Panc1 (cell line): ENCODE measurements at regions of chr22 and their contacts with region 1.

Region 1: DNA sequence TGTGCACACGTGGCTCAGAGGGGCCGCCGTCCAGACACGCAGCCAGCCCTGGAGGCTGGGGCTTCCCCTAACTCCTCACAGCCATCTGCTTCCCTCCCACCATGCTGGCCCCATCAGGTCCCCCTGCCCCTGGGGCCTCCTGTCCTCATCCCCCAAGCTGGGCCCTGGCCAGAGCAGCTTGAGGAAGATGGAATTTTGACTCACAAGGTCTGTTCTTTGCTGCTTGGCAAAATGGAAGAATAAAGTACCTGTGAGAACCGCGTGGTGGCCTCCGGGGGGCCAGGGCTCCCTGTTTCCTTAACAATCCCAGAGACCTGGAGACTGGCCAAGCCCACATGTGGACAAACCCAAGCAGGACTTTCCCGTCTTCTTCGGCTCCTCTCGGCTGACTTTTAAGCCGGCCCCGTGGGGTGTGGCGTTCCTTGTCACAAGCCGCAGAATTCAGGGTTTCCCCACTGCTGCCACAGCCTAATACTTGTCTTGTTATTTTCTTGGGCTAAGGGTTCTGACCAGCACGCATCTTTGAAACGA is 872.8 kb downstream of the BRD1 start:
- DNase-seq: no peak
- ATAC-seq: no peak
- H3K4me3 ChIP-seq: no peak overlapping the region
- H3K27ac ChIP-seq: no peak overlapping the region
- H3K4me1 ChIP-seq: no peaks in the 10 kb centered on the region
- H3K27me3 ChIP-seq: no peaks in the 10 kb centered on the region
- CTCF ChIP-seq: no peak

Region 2: DNA sequence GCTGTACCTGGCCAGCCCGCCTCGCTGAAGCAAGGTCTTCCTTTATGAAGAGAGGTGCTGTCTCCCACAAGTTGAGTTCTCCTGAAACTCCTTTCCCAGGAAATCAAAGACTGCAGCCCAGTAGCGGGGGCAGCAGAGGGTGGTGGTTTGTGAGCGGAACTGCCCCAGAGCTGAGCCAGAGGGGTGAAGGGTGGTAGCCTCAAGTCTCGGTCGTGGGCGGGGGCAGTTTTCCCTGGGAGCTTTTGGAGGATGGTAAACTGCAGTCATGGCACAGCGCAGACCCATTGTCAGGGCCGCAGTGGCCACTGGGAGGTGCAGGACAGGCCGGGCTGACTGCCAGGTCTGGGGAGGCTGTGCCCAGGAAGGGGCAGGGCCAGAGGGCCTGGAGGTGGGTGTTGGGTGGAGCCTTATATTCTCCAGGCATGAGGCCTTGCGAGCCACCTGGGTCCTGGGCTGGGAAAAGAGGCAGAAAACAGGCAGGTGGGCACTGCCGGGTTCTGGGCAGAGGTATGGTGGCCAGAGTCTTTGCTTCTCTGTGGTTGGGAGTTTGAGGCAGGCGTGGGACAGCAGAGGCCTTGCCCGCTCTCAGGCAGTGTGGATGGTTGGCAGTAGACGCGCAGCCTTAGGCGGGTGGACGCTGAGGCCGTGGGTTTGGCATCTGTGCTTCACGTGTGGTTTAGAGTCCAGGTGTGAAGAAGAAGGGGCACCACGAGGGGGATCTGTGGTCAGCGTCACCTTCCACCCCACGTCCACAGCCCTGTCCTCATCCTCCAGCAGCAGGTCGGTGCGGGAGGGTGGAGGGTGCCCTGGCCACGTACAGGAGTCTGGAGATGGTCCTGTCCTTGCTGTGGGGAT is 303.6 kb before region 1 on chr22:
- CTCF ChIA-PET with region 1: interaction called, 15 read pairs
- POLR2A ChIA-PET with region 1: no interaction called
- in situ Hi-C with region 1: no loop called
- intact Hi-C with region 1: no loop called
- DNase-seq: no peak
- ATAC-seq: no peak
- H3K4me3 ChIP-seq: no peak overlapping the region
- H3K27ac ChIP-seq: no peak overlapping the region
- H3K4me1 ChIP-seq: no peaks in the 10 kb centered on the region
- H3K27me3 ChIP-seq: no peaks in the 10 kb centered on the region; the same call in 1 of the 2 replicates
- CTCF ChIP-seq: no peak